ENCODE measurements at regions of chr14 and their contacts with region 1.

Region 1: DNA sequence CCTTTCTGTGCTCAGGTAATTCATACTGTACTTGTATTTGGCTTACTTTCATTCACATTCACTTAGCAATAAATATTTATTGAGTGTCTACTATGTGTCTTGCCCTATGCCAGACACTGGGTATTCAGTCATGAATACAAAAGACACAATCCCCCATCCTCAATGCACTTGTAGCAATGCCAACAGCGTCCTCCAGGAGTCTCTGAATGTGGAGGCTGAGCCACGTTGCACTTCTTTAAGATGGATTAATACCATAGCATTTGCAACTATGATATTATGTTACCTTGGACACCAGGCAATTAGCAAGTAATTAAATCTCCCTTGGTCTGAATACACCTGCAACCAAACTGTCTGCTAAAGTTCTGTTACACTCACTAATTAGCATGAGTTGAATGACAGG is 58.8 kb downstream of the OTX2 start:
- DNase-seq: no peak
- H3K4me3 ChIP-seq: no peak overlapping the region
- H3K27ac ChIP-seq: no peak overlapping the region
- H3K4me1 ChIP-seq: no peaks in the 10 kb centered on the region
- H3K27me3 ChIP-seq: peaks cover 4% of the 10 kb centered on the region
- CTCF ChIP-seq: no peak
- EP300 ChIP-seq: no peak
- POLR2A ChIP-seq: no peak

Region 2: GRCh38 chr14:56715938-56716337 is 35.5 kb before region 1 on chr14:
- in situ Hi-C with region 1: no loop called
- intact Hi-C with region 1: loop called (anchors 2 kb)
- DNase-seq: no peak
- H3K4me3 ChIP-seq: no peak overlapping the region
- H3K27ac ChIP-seq: no peak overlapping the region
- H3K4me1 ChIP-seq: no peaks in the 10 kb centered on the region
- H3K27me3 ChIP-seq: no peaks in the 10 kb centered on the region
- CTCF ChIP-seq: no peak
- EP300 ChIP-seq: no peak
- POLR2A ChIP-seq: no peak

Measured in transverse colon (tissue), 4 donors.